ENCODE measurements at regions of chr10 and their contacts with region 1.

Region 1: DNA sequence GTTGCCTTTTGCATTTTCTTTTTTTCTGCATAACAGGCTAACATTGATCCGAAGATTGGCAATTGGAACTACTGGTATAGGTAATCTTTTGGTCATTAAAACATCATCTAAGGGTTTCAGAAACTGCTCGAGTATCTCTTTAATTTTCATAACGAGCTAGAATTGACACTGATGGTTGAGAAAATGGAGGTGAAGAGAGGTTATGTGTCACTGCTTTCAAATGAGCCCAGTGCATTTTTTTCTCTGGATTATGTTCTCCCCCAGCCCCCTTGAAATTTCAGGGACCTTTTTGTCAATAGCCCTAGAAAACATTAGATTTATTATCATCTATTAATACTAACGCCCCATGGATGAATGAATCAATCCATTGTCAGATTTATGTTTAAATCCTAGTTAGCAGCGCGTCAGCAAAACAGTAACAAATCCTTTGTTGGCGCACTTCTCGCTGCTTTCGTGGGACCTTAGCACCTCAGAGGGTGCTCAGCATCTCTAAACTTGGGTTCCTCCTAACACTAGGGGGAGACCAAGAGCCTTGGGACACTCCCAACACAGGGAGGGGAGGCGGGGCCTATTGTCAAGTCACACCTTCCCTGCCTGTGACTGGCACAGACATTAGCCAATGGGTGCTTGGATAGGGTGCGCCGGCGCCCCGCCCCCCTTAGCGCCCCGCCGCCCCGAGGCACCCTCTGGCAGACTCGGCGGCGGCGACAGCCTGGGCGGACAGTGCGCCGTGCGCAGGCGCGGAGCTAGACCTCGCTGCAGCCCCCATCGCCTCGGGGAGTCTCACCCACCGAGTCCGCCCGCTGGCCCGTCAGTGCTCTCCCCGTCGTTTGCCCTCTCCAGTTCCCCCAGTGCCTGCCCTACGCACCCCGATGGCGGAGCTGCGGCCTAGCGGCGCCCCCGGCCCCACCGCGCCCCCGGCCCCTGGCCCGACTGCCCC is at the start of gene SUFU:
- DNase-seq: peak; percentile 99
- H3K4me3 Mint-ChIP-seq: peak within 1 kb of the TSS; percentile 94
- H3K27ac Mint-ChIP-seq: peak within 1 kb of the TSS; percentile 54
- H3K4me1 Mint-ChIP-seq: peaks cover 24% of the 10 kb centered on the region
- H3K27me3 Mint-ChIP-seq: no peaks in the 10 kb centered on the region
- total RNA-seq, gene SUFU: 6.6 to 7.1 TPM

Region 2: DNA sequence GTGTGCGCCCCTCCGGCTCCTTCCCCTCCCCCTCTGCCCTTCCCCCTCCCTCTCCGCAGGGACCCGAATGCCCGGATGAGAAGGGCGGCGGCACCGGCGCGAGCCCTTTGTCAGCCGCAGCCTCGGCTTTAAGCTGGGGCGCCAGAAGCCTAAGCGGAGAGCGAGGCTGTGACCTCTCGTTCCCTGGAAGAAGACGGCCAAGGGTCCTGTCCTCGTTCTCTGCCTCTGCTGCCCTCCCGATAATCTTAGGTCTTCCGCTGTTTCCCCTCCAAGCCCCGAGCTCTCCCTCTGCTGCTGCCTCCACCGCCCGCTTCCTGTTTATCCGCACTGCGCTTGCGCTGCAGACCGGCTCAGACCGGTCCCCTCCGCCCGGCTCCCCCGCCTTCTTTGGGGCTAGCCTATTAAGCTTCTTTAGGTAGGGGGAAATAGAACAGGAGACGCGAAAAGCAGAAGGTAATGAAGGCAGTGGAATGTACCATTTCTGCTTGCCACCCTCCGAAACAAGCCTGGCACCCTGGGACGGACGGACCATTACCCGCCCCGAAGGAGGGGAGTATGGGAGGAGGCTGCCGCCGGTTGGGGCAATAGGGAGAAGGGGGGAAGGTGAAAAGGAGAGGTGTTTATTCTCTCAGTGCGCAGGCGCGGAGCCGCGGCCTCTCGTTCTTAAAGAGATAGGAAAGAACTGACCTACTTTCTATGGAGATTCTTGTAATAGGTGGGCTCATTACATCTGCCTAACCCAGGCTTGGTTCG is 685.3 kb before region 1 on chr10 and contains the start of gene OGA:
- CTCF ChIA-PET with region 1: no interaction called
- intact Hi-C with region 1: loop called (anchors 1 kb)
- DNase-seq: peak; percentile 99
- H3K4me3 Mint-ChIP-seq: peak within 1 kb of the TSS; percentile 92
- H3K27ac Mint-ChIP-seq: peak within 1 kb of the TSS; percentile 93
- H3K4me1 Mint-ChIP-seq: peaks cover 40% of the 10 kb centered on the region
- H3K27me3 Mint-ChIP-seq: no peaks in the 10 kb centered on the region
- total RNA-seq, gene OGA: 90.8 to 96.3 TPM

Region 3: DNA sequence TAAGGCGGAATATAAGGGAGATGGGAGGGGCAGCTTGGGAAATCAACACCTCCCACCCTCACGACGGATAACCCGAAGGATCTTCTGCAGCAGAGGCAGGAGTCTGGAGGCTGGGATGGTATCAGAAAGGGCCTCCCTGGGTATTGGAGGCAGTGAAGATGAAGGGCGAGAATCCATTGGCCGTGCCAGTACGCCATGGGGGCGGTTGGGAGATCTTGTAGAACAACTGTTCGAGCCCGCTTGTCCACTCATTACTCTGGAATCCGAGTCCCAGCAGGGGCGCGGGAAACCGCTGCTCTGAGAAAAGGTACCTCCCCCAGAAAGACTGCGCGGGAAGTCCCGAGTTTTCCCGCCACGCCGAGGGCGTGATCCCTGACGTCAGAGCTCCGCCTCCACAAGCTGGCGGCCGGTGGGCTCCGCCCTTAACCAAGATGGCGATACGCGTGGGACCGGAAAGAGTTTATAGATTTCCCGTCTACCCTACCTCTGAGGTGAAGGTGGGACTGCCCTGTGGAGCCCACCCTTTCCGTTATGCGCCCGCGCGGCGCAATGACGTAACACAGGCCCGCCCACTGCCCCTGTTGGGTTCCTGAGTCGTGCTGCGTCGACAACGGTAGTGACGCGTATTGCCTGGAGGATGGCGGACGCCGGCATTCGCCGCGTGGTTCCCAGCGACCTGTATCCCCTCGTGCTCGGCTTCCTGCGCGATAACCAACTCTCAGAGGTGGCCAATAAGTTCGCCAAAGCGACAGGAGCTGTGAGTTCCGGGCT is 351.6 kb before region 1 on chr10 and contains the start of gene NOLC1:
- CTCF ChIA-PET with region 1: no interaction called
- intact Hi-C with region 1: loop called (anchors 1 kb)
- DNase-seq: peak; percentile 100
- H3K4me3 Mint-ChIP-seq: peak within 1 kb of the TSS; percentile 98
- H3K27ac Mint-ChIP-seq: peak within 1 kb of the TSS; percentile 96
- H3K4me1 Mint-ChIP-seq: peaks cover 53% of the 10 kb centered on the region
- H3K27me3 Mint-ChIP-seq: no peaks in the 10 kb centered on the region
- total RNA-seq, gene NOLC1: 182 to 194 TPM

Region 4: DNA sequence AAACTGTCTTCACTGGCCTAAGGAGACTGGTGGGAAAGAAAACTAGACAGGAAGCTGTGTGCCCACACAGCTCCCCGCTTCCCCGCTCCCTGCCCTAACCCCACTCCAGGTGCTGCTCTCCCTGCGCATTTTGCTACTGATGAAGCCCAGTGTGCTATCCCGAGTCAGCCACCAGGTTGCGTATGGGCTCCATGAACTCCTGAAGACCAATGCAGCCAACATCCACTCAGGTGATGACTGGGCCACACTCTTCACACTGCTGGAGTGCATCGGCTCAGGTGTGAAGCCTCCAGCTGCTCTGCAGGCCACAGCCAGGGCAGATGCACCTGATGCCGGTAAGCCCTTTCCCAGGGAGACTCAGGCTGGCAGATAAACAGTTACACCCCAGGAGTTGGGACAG is 128.3 kb before region 1 on chr10:
- CTCF ChIA-PET with region 1: no interaction called
- intact Hi-C with region 1: no loop called
- DNase-seq: no peak
- H3K4me3 Mint-ChIP-seq: no peak overlapping the region
- H3K27ac Mint-ChIP-seq: no peak overlapping the region
- H3K4me1 Mint-ChIP-seq: no peaks in the 10 kb centered on the region
- H3K27me3 Mint-ChIP-seq: no peaks in the 10 kb centered on the region

Region 5: DNA sequence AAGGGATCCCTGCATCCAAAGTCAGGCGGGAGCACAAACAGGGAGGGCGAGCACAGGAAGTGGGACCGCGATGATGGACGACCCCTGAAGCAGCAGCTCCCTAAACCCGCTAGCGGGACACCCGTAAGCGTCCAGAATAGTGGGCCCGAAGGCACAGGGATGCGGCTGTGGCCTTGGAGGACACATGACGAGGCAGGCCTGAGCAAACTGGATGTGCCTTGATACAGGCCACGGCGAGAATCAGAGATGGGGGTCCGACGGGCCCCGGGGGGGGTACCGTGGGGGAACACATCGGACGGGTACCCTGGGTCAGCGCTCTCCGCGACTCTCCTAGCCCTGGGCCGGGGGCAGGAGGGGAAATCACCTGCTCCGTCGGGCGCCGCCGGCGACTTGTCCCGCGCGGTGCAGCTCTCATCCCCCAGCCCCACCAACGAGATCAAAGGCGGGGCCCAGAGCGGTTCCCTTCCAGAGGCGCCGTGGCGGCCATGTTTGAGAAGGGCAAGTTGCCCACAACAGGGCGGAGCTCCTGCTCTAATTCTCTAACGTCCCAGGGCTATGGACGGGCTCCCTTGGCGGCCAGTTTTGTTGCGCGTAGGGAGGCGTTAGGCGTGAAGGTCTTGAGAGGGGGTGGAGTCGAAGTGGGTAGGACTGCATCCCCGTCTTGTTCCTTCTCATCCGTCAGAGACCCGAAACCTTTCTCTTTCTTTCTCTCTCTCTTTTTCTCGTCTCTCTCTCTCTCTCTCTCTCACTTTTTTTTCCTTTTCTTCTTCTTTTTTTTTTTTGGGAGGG is 71.2 kb before region 1 on chr10 and contains the start of gene CUEDC2:
- CTCF ChIA-PET with region 1: no interaction called
- intact Hi-C with region 1: loop called (anchors 1 kb)
- DNase-seq: peak; percentile 99
- H3K4me3 Mint-ChIP-seq: peak within 1 kb of the TSS; percentile 90
- H3K27ac Mint-ChIP-seq: peak within 1 kb of the TSS; percentile 92
- H3K4me1 Mint-ChIP-seq: peaks cover 47% of the 10 kb centered on the region
- H3K27me3 Mint-ChIP-seq: no peaks in the 10 kb centered on the region
- total RNA-seq, gene CUEDC2: 63.3 to 64.4 TPM

Region 6: DNA sequence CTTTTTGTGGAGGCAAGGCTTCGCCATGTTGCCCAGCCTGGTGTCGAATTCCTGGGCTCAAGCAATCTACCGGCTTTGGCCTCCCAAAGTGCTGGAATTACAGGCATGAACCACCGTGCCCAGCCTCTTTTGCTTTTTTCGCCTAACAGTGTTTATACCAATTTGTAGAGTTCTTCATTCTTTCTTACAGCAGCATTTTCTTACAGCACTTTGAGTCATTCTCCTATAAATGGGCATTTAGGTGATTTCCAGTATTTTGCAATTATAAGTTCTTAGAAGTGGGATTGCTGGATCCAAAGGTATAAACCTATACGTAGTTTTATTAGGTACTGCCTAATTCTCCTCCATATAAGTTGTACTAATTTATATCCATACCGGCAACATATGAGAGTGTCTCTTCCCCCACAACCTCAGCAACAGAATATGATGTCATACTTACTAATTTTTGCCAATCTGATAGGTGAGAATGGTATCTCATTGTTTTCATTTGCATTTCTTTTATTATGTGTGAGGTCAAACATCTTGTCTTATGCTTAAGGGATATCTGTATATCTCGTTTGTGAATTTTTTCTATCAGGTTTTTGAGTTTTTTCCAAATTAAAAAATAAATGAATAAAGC is 39.4 kb after region 1 on chr10:
- CTCF ChIA-PET with region 1: no interaction called
- intact Hi-C with region 1: loop called (anchors 2 kb)
- DNase-seq: no peak
- H3K4me3 Mint-ChIP-seq: no peak overlapping the region
- H3K27ac Mint-ChIP-seq: peak overlapping the region; percentile 61
- H3K4me1 Mint-ChIP-seq: peaks cover 15% of the 10 kb centered on the region
- H3K27me3 Mint-ChIP-seq: no peaks in the 10 kb centered on the region

Region 7: DNA sequence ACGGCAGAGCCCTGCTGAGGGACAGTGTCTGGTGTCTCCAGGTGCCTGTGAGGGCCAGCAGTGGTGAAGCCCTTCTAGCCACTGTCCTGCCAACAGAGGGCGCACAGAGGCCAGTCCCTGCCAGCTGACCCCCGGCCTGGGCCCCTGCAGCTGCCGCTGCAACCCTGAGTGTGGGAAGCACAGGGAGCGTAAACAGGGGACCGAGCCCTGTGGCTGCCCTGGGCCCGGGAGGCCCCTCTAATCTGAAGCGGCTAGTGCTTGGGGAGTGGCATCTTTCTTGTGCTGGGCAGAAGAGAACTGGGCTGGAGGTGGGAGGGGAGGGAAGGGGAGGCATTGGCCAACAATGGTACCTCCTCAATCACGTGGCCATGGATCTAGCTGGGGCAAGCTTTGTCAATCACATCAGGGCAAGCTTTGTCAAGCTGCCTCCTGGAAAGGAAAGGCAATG is 175.3 kb after region 1 on chr10:
- CTCF ChIA-PET with region 1: interaction called, 3 read pairs
- intact Hi-C with region 1: loop called (anchors 1 kb)
- DNase-seq: no peak
- H3K4me3 Mint-ChIP-seq: no peak overlapping the region
- H3K27ac Mint-ChIP-seq: no peak overlapping the region
- H3K4me1 Mint-ChIP-seq: peaks cover 41% of the 10 kb centered on the region
- H3K27me3 Mint-ChIP-seq: no peaks in the 10 kb centered on the region

Region 8: DNA sequence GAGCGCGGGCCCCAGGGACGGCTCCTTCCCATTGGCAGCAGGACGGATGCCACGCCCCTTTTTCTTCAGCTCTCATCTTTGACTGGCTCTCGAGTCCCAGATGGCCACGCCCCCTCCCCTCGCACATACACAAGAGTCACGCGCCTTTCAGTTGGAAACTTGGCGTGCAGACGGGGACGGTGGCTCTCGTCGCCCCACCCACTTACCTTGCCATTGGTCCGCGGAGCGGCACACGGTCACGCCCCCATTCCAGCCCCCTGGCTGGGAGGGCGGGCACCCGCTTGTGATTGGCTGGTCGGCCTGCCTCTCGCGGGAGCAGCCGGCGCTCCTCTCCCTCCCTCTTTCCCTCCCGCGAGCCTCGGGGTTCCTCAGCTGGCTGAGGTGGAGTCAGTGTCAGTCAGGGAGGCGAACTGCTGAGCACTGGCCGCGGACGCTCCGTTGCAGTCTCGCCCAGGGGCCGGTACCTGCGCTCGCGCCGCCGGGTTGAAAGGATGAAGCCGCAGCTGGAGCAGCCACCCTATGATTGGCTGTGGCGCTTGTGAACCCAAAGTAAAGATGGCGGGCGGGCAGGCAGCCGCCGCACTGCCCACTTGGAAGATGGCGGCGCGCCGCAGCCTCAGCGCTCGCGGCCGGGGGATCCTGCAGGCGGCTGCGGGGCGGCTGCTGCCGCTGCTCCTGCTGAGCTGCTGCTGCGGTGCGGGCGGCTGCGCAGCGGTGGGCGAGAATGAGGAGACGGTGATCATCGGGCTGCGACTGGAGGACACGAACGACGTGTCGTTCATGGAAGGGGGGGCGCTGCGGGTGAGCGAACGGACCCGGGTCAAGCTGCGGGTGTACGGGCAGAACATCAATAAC is 414.6 kb after region 1 on chr10 and contains the start of gene CNNM2:
- CTCF ChIA-PET with region 1: no interaction called
- intact Hi-C with region 1: loop called (anchors 1 kb)
- DNase-seq: peak; percentile 100
- H3K4me3 Mint-ChIP-seq: peak within 1 kb of the TSS; percentile 92
- H3K27ac Mint-ChIP-seq: peak within 1 kb of the TSS; percentile 88
- H3K4me1 Mint-ChIP-seq: peaks cover 49% of the 10 kb centered on the region
- H3K27me3 Mint-ChIP-seq: peaks cover 5% of the 10 kb centered on the region
- total RNA-seq, gene CNNM2: 3.9 to 4.3 TPM